ENCODE measurements at regions of chr13 and their contacts with region 1.

Region 1: GRCh38 chr13:112689303-112690165 is at the start of gene ATP11A:
- DNase-seq: peak; percentile 95
- H3K4me3 Mint-ChIP-seq: peak within 1 kb of the TSS; percentile 92
- H3K27ac Mint-ChIP-seq: peak within 1 kb of the TSS; percentile 94
- H3K4me1 Mint-ChIP-seq: peaks cover 49% of the 10 kb centered on the region
- H3K27me3 Mint-ChIP-seq: peaks cover under 1% of the 10 kb centered on the region
- total RNA-seq, gene ATP11A: 79.4 and 80.6 TPM in 2 replicates

Region 2: GRCh38 chr13:112558696-112559418 is 130.7 kb before region 1 on chr13:
- intact Hi-C with region 1: no loop called
- DNase-seq: no peak
- H3K4me3 Mint-ChIP-seq: no peak overlapping the region
- H3K27ac Mint-ChIP-seq: no peak overlapping the region
- H3K4me1 Mint-ChIP-seq: peaks cover 11% of the 10 kb centered on the region
- H3K27me3 Mint-ChIP-seq: no peaks in the 10 kb centered on the region

Region 3: DNA sequence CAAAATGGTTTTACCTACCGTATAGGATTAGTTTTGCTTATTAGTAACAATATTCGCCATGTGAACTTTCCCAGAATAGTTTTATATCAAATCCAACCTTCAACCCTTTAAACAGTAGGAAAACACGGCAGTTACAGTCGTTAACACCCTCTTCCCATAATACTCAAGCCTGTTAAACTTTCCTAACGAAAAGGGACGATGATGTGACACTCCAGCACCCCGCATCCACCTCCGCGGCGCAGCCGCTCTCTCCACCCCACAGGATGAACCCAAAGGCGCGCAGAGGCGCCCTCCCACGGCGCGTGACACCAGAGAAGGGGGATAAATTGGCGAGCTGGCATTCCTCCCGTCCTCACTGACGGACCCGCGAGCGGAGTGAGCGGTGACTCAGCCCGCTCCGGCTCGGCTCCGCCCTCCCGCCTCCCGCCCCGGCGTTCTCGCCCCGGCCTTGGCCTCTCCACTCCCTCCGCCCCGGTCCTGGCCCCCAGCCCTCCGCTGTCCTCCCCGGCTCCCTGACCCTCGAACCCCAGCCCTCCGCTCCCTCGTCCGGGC is 102.2 kb before region 1 on chr13:
- intact Hi-C with region 1: loop called (anchors 1 kb)
- DNase-seq: peak; percentile 90
- H3K4me3 Mint-ChIP-seq: peak overlapping the region; percentile 98
- H3K27ac Mint-ChIP-seq: peak overlapping the region; percentile 96
- H3K4me1 Mint-ChIP-seq: peaks cover 32% of the 10 kb centered on the region
- H3K27me3 Mint-ChIP-seq: no peaks in the 10 kb centered on the region

Region 4: GRCh38 chr13:112638157-112638750 is 51.3 kb before region 1 on chr13:
- intact Hi-C with region 1: loop called (anchors 1 kb)
- DNase-seq: peak; percentile 62
- H3K4me3 Mint-ChIP-seq: no peak overlapping the region
- H3K27ac Mint-ChIP-seq: no peak overlapping the region
- H3K4me1 Mint-ChIP-seq: peaks cover 10% of the 10 kb centered on the region
- H3K27me3 Mint-ChIP-seq: peaks cover 21% of the 10 kb centered on the region

Region 5: DNA sequence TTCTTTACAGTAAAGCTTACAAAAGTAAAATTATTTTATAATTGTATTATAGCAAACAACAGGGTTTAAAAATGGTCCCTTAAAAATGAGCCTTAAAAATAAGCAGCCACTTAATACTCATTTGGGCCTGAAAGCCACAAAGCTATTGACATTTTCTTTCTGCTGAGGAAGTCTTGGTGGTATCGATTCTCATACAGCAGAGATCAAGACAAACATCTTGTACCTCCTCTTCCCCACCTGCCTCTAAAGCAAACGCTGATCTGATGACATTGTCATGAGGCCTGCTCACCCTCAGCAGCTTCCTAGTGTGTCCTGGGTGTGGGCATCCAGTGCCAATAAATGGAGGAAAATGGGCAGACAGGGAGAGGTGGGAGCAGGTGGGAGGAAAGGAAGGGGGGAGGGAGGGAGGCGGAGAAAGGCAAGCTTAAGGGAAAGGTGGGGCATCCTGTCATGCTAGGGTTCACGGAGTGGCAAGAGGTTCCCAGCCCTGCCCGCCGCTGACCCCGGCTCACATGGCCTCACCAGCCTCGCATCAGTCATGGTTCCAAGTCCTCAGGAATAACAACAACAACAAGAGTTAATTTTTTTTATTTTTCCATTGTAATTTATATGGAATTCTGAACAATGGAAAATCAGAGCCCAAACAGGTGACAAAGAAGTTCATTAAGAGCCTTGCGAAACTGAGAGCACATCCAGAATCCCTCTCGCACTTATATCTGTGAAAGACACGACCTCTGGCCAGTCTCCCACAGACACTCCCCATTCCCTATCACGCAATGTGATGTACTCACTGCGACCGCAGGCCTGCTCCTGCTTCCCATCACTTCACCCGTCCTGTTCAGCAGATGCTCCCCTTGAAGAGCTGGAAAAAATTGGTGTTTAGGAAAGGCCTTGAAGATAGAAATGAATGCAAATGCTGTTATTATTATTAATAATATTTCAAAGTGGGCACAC is 14.8 kb before region 1 on chr13:
- intact Hi-C with region 1: loop called (anchors 1 kb)
- DNase-seq: no peak
- H3K4me3 Mint-ChIP-seq: no peak overlapping the region
- H3K27ac Mint-ChIP-seq: peak overlapping the region; percentile 56
- H3K4me1 Mint-ChIP-seq: peaks cover 25% of the 10 kb centered on the region
- H3K27me3 Mint-ChIP-seq: peaks cover 9% of the 10 kb centered on the region

Region 6: DNA sequence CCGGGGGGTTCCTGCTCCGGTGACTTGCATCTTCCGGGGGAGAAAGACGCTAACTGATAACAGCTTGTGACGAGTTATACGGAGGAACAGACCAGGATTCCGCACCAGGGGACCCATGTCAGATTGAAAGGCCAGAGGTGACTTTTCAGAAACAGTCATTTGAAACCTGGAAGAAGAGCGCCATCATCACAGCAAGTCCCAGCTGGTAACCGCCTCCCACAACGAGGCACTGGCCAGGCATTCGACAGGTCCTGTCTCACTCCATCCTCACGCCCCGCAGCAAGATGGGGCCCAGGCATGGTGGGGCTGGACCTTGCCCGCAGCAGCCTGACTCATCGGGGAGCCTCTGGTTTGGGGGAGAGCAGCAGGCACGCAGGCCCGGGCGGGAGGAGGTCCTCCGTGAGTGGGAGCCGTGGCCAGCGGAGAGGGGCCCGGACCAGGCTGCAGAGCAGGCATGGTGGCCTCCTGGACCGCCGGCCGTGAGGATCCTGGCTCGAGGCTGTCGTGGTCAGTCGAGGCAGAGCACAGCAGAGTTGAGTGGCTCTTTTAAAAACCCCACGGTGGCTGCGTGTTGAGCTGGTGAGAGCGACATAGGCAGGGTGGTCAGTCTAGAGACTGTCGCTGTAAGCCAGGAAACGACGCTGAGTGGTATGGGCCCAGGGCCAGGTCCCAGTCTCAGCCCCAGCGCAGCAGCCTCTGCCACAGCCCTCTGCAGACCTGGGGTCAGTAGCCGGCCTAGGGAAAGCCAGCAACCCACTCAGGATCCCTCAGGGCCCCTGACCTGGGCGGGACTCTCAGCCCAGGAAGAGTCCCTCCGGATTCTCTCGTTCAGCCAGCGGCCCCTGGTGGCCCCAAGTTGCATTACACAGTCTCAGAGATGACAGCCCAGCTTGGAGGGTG is 184.6 kb after region 1 on chr13:
- intact Hi-C with region 1: loop called (anchors 5 kb)
- DNase-seq: peak; percentile 86
- H3K4me3 Mint-ChIP-seq: no peak overlapping the region
- H3K27ac Mint-ChIP-seq: peak overlapping the region; percentile 61
- H3K4me1 Mint-ChIP-seq: peaks cover 14% of the 10 kb centered on the region
- H3K27me3 Mint-ChIP-seq: no peaks in the 10 kb centered on the region

Measured in activated CD4-positive, alpha-beta T cell treated with anti-CD3 and anti-CD28 coated beads, Interleukin-2, amount 10 ng/mL, durations not matched to agents 24 days and 14 days (primary cell).